A549 (cell line): ENCODE measurements at regions of chr15 and their contacts with region 1.

Region 1: DNA sequence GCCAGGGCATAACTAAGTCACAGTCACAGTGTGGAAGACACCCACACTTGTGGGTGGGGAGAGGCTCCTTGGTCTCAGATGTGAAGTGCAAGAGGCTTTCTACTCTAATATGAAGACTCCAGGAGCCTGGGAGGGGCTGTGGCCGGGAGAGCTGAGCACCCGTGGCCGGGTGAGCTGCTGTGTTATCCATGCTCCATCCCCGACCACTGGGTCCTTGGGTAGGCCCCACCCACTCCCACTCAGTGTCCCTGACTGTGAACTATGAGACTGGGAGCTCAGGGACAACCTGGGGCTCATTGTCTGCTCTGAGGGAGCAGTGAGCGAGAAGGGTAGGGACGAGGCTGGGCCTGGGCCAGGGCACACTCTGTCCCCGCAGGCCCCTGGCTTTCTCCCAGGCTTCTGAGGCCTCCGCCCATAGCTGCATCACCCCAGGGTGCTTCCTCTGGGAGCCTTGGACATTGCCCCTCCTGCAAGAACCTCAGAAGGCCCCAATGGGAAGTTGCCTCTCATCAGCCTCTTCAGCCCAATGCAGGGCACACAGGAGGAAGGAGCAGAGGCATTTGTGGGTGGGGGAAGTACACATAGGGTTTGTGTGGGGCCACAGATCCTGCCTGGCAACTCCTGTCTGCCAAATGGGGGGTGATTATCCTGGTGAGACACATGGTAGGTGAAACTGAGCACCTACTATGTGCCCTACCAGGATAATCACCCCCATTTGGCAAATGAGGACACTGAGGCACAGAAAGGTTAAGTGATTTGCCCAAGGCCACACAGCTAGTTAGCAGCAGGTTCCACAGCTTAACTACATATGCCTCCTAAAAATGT is 2.4 kb downstream of the ANPEP start:
- DNase-seq: peak in 1 of 2 experiments; percentile 31
- ATAC-seq: peak; percentile 14 to 39; a peak in 5 of 6 replicates
- H3K4me3 ChIP-seq: no peak overlapping the region
- H3K27ac ChIP-seq: peak overlapping the region; percentile 39 to 42; a peak in 4 of 6 replicates
- H3K4me1 ChIP-seq: peaks cover 21% of the 10 kb centered on the region
- CTCF ChIP-seq: no peak
- EP300 ChIP-seq: no peak
- POLR2A ChIP-seq: no peak
- RAD21 ChIP-seq: no peak

Region 2: DNA sequence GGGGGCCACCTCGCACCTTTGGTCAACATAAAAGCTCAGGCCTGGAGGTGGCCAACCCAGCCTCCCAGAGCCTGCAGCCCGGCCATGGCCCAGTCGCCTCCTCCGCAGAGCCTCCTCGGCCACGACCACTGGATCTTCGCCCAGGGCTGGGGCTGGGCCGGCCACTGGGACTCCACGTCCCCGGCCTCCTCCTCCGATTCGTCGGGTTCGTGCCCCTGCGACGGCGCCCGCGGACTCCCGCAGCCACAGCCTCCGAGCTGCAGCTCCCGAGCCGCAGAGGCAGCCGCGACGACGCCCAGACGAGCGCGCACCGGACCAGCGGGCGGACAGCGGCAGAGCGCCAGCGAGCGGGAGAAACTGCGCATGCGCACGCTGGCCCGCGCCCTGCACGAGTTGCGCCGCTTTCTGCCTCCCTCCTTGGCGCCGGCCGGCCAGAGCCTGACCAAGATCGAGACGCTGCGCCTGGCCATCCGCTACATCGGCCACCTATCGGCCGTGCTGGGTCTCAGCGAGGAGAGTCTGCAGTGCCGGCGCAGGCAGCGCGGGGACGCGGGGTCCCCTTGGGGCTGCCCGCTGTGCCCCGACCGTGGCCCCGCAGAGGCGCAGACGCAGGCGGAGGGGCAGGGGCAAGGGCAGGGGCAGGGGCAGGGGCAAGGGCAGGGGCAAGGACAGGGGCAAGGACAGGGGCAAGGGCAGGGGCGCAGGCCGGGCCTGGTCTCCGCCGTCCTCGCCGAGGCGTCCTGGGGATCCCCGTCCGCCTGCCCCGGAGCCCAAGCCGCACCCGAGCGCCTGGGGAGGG is 35.8 kb before region 1 on chr15 and contains the start of gene MESP2:
- CTCF ChIA-PET with region 1: interaction called, 12 read pairs
- POLR2A ChIA-PET with region 1: no interaction called
- DNase-seq: peak; percentile 73 to 90
- ATAC-seq: peak; percentile 87 to 96
- H3K4me3 ChIP-seq: peak within 1 kb of the TSS; percentile 38
- H3K27ac ChIP-seq: peak within 1 kb of the TSS; percentile 71 to 89
- H3K4me1 ChIP-seq: peaks cover 24% of the 10 kb centered on the region
- CTCF ChIP-seq: no peak
- EP300 ChIP-seq: no peak
- POLR2A ChIP-seq: peak; percentile 67
- RAD21 ChIP-seq: peak in 1 of 2 experiments; percentile 26; a peak in 2 of 5 replicates
- polyA plus RNA-seq, gene MESP2: 0.22 and 0.24 TPM in 2 replicates

Region 3: GRCh38 chr15:89851673-89852341 is 39.6 kb after region 1 on chr15:
- CTCF ChIA-PET with region 1: no interaction called
- POLR2A ChIA-PET with region 1: no interaction called
- DNase-seq: no peak
- ATAC-seq: no peak
- H3K4me3 ChIP-seq: no peak overlapping the region
- H3K27ac ChIP-seq: peak overlapping the region in 1 of 2 experiments; percentile 3; a peak in 1 of 6 replicates
- H3K4me1 ChIP-seq: peaks cover 48% of the 10 kb centered on the region
- CTCF ChIP-seq: no peak
- EP300 ChIP-seq: no peak
- POLR2A ChIP-seq: no peak
- RAD21 ChIP-seq: no peak

Region 4: GRCh38 chr15:89863918-89864317 is 51.7 kb after region 1 on chr15:
- CTCF ChIA-PET with region 1: no interaction called
- POLR2A ChIA-PET with region 1: no interaction called
- DNase-seq: no peak
- ATAC-seq: no peak
- H3K4me3 ChIP-seq: no peak overlapping the region
- H3K27ac ChIP-seq: no peak overlapping the region
- H3K4me1 ChIP-seq: peaks cover 2% of the 10 kb centered on the region
- CTCF ChIP-seq: no peak
- EP300 ChIP-seq: no peak
- POLR2A ChIP-seq: no peak
- RAD21 ChIP-seq: 0 out of 5 replicates have a peak, but pooled peaks of 1 of the 2 experiments have one; percentile 9

Region 5: DNA sequence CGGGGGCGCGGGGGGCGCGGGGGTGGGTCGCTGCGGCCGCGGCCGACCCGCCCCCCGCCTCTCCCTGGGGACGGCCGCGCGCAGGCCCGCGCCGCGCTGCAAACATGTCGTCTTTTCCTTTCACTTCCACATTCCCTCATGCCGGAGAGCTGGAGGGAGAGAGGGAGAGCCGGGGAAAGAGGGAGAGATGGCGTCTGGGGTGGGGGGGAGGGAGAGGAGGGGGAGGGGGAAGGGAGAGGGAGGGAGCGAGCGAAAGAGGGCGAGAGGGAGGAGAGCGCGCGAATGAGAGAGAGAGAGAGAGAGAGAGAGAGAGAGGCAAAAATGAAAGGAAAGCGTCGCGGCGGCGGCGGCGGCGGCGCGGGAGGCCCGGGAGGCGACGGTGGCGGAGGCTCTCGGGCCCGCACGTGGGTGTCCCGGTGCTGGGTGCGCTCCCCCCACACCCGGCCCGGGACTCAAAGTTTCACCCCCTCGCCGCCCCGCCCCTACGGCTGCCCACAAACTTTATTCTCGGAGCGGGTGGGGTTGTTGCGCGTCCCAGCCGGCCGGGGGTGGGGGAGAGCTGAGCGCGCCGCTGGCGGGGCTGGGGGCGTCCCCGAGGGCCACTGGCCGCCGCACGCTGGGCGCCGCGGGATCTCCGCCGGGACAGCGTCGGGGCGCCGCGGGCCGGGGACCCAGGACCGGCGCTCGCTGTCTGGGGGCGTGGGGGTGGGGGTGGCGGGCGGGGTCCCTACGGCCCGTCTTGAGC is 189.6 kb after region 1 on chr15:
- CTCF ChIA-PET with region 1: no interaction called
- POLR2A ChIA-PET with region 1: no interaction called
- DNase-seq: peak; percentile 67 to 75
- ATAC-seq: peak; percentile 11 to 37
- H3K4me3 ChIP-seq: peak overlapping the region; percentile 85
- H3K27ac ChIP-seq: peak overlapping the region; percentile 93 to 97
- H3K4me1 ChIP-seq: peaks cover 66% of the 10 kb centered on the region
- CTCF ChIP-seq: no peak
- EP300 ChIP-seq: no peak
- POLR2A ChIP-seq: no peak
- RAD21 ChIP-seq: no peak